Activated T-helper 1 cell treated with anti-CD3 and anti-CD28 coated beads, Interleukin-12 subunit alpha, Interleukin-12 subunit beta, Interleukin-2, Interleukin-4 antibody, amounts not matched to agents 30 ng/mL and 10 ng/mL and 1 ng/mL, durations not matched to agents 14 hours and 24 hours and 36 hours (primary cell): ENCODE measurements at regions of chr2 and their contacts with region 1.

Region 1: DNA sequence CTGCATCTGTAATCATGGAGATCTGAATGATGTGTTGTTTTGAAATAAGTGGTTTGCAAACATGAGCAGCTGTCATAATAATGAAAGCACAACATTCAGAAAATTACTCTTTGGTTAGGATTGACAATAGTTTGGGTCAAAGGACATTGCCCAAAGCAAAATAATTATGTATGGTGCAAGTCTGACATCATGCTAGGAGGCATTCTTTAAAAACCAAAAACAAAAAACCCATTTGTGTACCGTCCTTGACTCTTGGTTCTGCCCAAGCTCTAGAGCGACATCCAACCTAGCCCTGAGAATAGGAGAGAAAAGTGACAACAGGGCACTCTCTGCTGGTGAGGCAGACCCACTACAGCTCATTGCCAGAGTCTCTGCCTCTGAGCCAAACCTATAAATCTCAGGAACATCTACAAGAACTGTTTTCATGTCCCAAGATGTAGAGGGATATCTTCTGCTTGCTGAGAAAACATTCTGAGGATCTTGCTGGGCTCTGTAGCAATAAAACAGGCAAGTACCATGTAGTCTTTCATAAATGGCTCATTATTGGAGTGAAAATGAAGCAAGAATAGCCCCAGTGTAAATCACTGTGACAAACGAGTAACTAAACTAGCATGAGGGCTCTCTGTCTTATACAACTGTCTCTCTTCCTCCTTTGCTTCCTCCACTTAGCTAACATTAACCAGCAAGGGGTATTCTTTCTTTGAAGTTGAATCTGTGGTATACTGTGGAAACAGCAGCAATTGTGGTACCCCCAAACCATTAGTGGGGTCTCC is 266.8 kb upstream of the CXCR4 start:
- DNase-seq: peak; percentile 43
- H3K4me3 Mint-ChIP-seq: no peak overlapping the region
- H3K27ac Mint-ChIP-seq: peak overlapping the region; percentile 99
- H3K4me1 Mint-ChIP-seq: peaks cover 39% of the 10 kb centered on the region
- H3K27me3 Mint-ChIP-seq: no peaks in the 10 kb centered on the region

Region 2: GRCh38 chr2:134918526-134919340 is 1466.0 kb before region 1 on chr2 and contains the start of gene CCNT2:
- intact Hi-C with region 1: loop called (anchors 5 kb)
- DNase-seq: peak; percentile 100
- H3K4me3 Mint-ChIP-seq: peak within 1 kb of the TSS; percentile 96
- H3K27ac Mint-ChIP-seq: peak within 1 kb of the TSS; percentile 97
- H3K4me1 Mint-ChIP-seq: peaks cover 28% of the 10 kb centered on the region
- H3K27me3 Mint-ChIP-seq: peaks cover 11% of the 10 kb centered on the region
- total RNA-seq, gene CCNT2: 41.4 and 43.7 TPM in 2 replicates

Region 3: GRCh38 chr2:135531231-135532228 is 853.2 kb before region 1 on chr2 and contains the start of gene R3HDM1:
- intact Hi-C with region 1: loop called (anchors 2 kb)
- DNase-seq: peak; percentile 95
- H3K4me3 Mint-ChIP-seq: no peak within 1 kb of the TSS
- H3K27ac Mint-ChIP-seq: peak within 1 kb of the TSS; percentile 83
- H3K4me1 Mint-ChIP-seq: peaks cover 17% of the 10 kb centered on the region
- H3K27me3 Mint-ChIP-seq: no peaks in the 10 kb centered on the region
- total RNA-seq, gene R3HDM1: 63.0 and 64.0 TPM in 2 replicates

Region 4: DNA sequence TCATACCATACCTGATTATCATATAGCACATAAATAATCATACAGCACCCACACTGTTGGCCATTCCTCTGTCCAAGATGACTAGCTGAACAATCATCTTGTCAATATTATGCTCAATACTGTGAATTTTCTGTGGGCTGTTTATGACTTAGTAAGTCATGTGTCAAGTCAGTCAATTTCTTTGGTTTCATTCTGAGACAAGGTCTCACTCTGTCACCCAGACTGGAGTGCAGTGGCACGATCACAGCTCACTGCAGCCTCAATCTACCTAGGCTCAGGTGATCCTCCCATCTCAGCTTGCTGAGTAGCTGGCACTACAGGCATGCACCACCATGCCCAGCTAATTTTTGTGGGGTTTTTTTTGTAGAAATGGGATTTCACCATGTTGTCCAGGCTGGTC is 514.1 kb before region 1 on chr2:
- intact Hi-C with region 1: loop called (anchors 1 kb)
- DNase-seq: no peak
- H3K4me3 Mint-ChIP-seq: no peak overlapping the region
- H3K27ac Mint-ChIP-seq: peak overlapping the region; percentile 35
- H3K4me1 Mint-ChIP-seq: peaks cover 75% of the 10 kb centered on the region
- H3K27me3 Mint-ChIP-seq: no peaks in the 10 kb centered on the region

Region 5: DNA sequence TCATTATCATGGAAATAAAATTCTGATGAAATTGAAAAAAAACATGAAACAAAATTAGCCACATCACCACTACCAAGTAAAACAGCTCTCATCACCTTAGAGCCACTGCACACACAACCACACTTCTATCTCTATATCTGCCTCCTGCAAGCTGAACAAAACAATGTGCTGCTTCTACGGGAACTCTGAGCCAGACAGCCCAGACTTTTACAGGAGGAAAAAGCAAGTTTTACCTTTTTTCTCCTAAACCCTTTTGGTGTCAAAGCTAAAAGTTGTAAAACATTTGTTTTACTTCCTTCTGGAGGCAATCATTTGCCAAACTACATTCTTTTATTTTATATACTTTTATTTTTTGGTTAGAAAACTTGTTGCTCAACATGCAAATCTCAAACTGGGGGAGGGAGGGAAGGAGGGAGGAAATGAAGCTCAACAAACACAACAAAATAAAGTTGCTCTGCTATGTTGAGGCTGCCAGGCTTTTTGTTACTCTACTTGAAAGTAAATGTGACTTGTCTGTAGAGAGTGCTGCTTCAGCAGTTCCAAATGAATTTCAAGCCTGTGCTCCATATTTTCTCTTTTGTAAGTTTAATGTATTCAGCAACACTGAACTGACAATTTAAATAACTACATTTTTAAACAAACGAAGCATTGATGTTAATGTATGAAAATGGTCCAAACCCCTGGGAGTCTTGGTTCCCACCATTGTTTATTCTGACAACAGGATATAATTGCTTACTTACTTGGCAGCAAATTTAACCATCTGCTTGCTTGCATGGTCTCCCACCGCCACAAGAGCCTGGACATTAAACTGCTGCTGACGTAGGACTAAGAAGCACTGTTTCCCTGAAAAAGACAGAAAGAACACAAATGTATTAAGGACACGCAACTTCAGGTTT is 423.8 kb before region 1 on chr2:
- intact Hi-C with region 1: loop called (anchors 1 kb)
- DNase-seq: peak; percentile 16
- H3K4me3 Mint-ChIP-seq: peak overlapping the region; percentile 28
- H3K27ac Mint-ChIP-seq: peak overlapping the region; percentile 80
- H3K4me1 Mint-ChIP-seq: peaks cover 55% of the 10 kb centered on the region
- H3K27me3 Mint-ChIP-seq: no peaks in the 10 kb centered on the region

Region 6: GRCh38 chr2:136117909-136118818 is 266.6 kb before region 1 on chr2 and contains the start of gene CXCR4:
- intact Hi-C with region 1: loop called (anchors 1 kb)
- DNase-seq: peak; percentile 85
- H3K4me3 Mint-ChIP-seq: peak within 1 kb of the TSS; percentile 97
- H3K27ac Mint-ChIP-seq: peak within 1 kb of the TSS; percentile 98
- H3K4me1 Mint-ChIP-seq: peaks cover 73% of the 10 kb centered on the region
- H3K27me3 Mint-ChIP-seq: peaks cover 31% of the 10 kb centered on the region
- total RNA-seq, gene CXCR4: 83.3 and 86.3 TPM in 2 replicates

Region 7: GRCh38 chr2:136310797-136311603 is 73.7 kb before region 1 on chr2:
- intact Hi-C with region 1: loop called (anchors 1 kb)
- DNase-seq: no peak
- H3K4me3 Mint-ChIP-seq: peak overlapping the region; percentile 38
- H3K27ac Mint-ChIP-seq: peak overlapping the region; percentile 83
- H3K4me1 Mint-ChIP-seq: peaks cover 38% of the 10 kb centered on the region
- H3K27me3 Mint-ChIP-seq: peaks cover 4% of the 10 kb centered on the region